ENCODE measurements at regions of chr11 and their contacts with region 1.

Region 1: GRCh38 chr11:119356349-119357031 is 10.0 kb upstream of the MFRP start:
- DNase-seq: peak; percentile 54 to 86 (median 73)
- ATAC-seq: peak; percentile 92
- H3K4me3 ChIP-seq: peak overlapping the region; percentile 73 to 96
- H3K4me3 Mint-ChIP-seq: peak overlapping the region; percentile 91
- H3K27ac ChIP-seq: no peak overlapping the region
- H3K27ac Mint-ChIP-seq: peak overlapping the region; percentile 76
- H3K4me1 ChIP-seq: no peaks in the 10 kb centered on the region
- H3K4me1 Mint-ChIP-seq: peaks cover 7% of the 10 kb centered on the region
- H3K27me3 ChIP-seq: peaks cover 0 to 15% of the 10 kb centered on the region in 2 experiments
- H3K27me3 Mint-ChIP-seq: peaks cover 20% of the 10 kb centered on the region
- CTCF ChIP-seq: peak; percentile 100

Region 2: DNA sequence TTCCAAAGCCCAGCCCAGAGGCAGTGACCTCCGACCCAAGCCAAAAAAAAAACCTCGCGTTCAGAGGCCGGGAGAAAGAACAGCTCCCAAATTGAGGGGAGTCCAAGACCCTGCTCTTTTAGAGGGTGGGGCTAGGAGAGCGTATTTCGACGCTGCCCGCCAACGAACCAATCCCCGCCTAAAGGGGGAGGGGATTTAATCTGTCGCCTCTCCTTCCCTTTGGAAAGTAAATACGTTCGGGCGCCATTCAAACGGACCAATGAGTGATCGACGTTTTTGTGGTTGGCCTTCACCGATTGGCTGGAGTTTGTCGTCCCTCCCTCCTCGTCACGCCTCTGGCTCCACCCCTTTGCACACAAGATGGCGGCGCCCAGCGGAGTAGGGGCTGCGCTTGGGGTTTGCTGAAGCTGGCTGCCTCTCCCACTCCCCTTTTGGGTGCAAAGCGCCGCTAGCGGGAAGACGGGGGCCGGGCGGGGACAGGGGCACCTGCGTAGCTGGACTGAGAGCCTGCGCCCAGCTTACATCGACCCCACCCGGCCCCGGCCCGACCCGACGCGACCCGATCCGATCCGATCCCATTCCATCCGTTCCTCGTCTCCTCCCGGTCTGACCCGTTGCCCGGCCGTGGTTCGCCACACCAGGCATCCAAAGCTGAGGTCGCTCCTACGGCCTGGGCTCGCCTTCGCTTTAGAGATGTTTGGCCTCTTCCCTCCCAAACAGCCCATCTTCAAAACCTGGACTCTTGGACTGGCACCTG is 22.1 kb before region 1 on chr11 and contains the start of gene RNF26:
- CTCF ChIA-PET with region 1: interaction called, 18 read pairs
- POLR2A ChIA-PET with region 1: no interaction called
- intact Hi-C with region 1: no loop called
- DNase-seq: peak; percentile 88 to 98 (median 93)
- ATAC-seq: peak; percentile 95
- H3K4me3 ChIP-seq: peak within 1 kb of the TSS; percentile 77 to 98
- H3K4me3 Mint-ChIP-seq: peak within 1 kb of the TSS; percentile 98
- H3K27ac ChIP-seq: peak within 1 kb of the TSS; percentile 68 to 86
- H3K27ac Mint-ChIP-seq: peak within 1 kb of the TSS; percentile 97
- H3K4me1 ChIP-seq: peaks cover 13% of the 10 kb centered on the region
- H3K4me1 Mint-ChIP-seq: peaks cover 27% of the 10 kb centered on the region
- H3K27me3 ChIP-seq: peaks cover 10 to 11% of the 10 kb centered on the region in 2 experiments
- H3K27me3 Mint-ChIP-seq: peaks cover 12% of the 10 kb centered on the region
- CTCF ChIP-seq: no peak
- total RNA-seq, gene RNF26: 20.9 TPM

Region 3: GRCh38 chr11:119373921-119374631 is 17.6 kb after region 1 on chr11:
- CTCF ChIA-PET with region 1: interaction called, 149 read pairs
- POLR2A ChIA-PET with region 1: interaction called, 4 read pairs
- intact Hi-C with region 1: loop called in 1 of 2 experiments (anchors 1 kb)
- DNase-seq: peak in 4 of 9 experiments; percentile 43 to 67 (median 54)
- ATAC-seq: peak; percentile 73
- H3K4me3 ChIP-seq: no peak overlapping the region
- H3K4me3 Mint-ChIP-seq: no peak overlapping the region
- H3K27ac ChIP-seq: no peak overlapping the region
- H3K27ac Mint-ChIP-seq: no peak overlapping the region
- H3K4me1 ChIP-seq: peaks cover 8% of the 10 kb centered on the region
- H3K4me1 Mint-ChIP-seq: peaks cover 14% of the 10 kb centered on the region
- H3K27me3 ChIP-seq: no peaks in the 10 kb centered on the region
- H3K27me3 Mint-ChIP-seq: peaks cover 13% of the 10 kb centered on the region
- CTCF ChIP-seq: peak; percentile 55

Region 4: GRCh38 chr11:119474682-119475596 is 118.4 kb after region 1 on chr11:
- CTCF ChIA-PET with region 1: interaction called, 34 read pairs
- POLR2A ChIA-PET with region 1: no interaction called
- intact Hi-C with region 1: loop called in 1 of 2 experiments (anchors 1 kb)
- DNase-seq: peak; percentile 10 to 71 (median 48)
- ATAC-seq: peak; percentile 75
- H3K4me3 ChIP-seq: no peak overlapping the region
- H3K4me3 Mint-ChIP-seq: no peak overlapping the region
- H3K27ac ChIP-seq: no peak overlapping the region
- H3K27ac Mint-ChIP-seq: no peak overlapping the region
- H3K4me1 ChIP-seq: no peaks in the 10 kb centered on the region
- H3K4me1 Mint-ChIP-seq: no peaks in the 10 kb centered on the region
- H3K27me3 ChIP-seq: no peaks in the 10 kb centered on the region
- H3K27me3 Mint-ChIP-seq: peaks cover 34% of the 10 kb centered on the region
- CTCF ChIP-seq: peak; percentile 69

Region 5: GRCh38 chr11:119545978-119546885 is 189.7 kb after region 1 on chr11:
- CTCF ChIA-PET with region 1: no interaction called
- POLR2A ChIA-PET with region 1: no interaction called
- intact Hi-C with region 1: no loop called
- DNase-seq: peak in 1 of 9 experiments; percentile 39
- ATAC-seq: no peak
- H3K4me3 ChIP-seq: no peak overlapping the region
- H3K4me3 Mint-ChIP-seq: no peak overlapping the region
- H3K27ac ChIP-seq: no peak overlapping the region
- H3K27ac Mint-ChIP-seq: no peak overlapping the region
- H3K4me1 ChIP-seq: no peaks in the 10 kb centered on the region
- H3K4me1 Mint-ChIP-seq: no peaks in the 10 kb centered on the region
- H3K27me3 ChIP-seq: no peaks in the 10 kb centered on the region
- H3K27me3 Mint-ChIP-seq: peaks cover 4% of the 10 kb centered on the region
- CTCF ChIP-seq: no peak

Region 6: DNA sequence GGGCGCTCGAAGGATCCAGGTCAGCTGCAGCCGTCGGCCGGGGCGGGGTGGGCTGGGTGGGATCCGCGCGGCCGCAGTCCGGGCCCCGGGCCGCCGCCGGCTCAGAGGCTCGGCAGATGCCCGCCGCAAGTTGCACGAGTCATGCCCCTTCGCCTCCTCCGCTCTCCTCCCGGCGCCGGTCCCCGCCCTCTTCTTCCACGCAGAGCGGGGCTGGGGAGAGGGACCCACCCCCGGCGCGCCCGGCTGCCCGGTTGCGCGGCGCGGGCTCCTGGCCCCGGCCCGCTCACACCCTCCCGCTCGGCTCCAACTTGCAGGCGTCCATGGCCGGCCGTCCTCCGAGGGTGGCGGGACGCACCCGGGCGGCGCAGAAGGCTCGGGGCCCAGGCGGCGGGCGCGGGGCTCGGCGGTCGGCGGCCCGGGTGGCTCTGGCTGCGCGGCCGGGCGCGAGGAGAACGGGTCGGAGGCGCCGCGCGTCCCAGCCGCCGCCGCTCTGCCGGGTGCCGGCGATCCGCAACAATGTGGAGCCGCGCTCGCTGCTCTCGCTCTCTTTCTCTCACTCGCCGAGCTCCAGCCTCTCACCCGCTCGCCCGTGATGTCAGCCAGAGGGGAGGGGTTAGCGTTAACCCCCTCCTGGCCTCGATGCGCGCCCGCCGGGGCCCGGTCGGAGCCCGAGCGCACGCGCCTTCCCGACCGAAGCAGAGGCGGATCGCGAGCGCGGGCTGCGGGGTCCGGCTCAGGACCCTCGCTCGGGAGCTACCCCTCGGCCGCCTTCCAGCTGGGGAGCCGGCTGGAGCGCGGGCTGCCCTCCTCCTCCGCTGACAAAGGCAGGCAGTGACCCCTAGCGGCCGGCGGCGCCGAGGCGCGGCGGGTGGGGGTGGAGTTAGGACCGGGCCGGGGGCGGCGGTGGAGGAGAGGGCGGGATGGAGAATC is 372.4 kb after region 1 on chr11 and contains the start of gene NECTIN1:
- CTCF ChIA-PET with region 1: interaction called, 6 read pairs
- POLR2A ChIA-PET with region 1: no interaction called
- intact Hi-C with region 1: loop called in 1 of 2 experiments (anchors 10 kb)
- DNase-seq: peak; percentile 67 to 90 (median 84)
- ATAC-seq: peak; percentile 86
- H3K4me3 ChIP-seq: peak within 1 kb of the TSS; percentile 56 to 88
- H3K4me3 Mint-ChIP-seq: peak within 1 kb of the TSS; percentile 94
- H3K27ac ChIP-seq: no peak within 1 kb of the TSS
- H3K27ac Mint-ChIP-seq: peak within 1 kb of the TSS; percentile 86
- H3K4me1 ChIP-seq: peaks cover 20% of the 10 kb centered on the region
- H3K4me1 Mint-ChIP-seq: peaks cover 19% of the 10 kb centered on the region
- H3K27me3 ChIP-seq: peaks cover 9 to 15% of the 10 kb centered on the region in 2 experiments
- H3K27me3 Mint-ChIP-seq: peaks cover 16% of the 10 kb centered on the region
- CTCF ChIP-seq: peak; percentile 96
- total RNA-seq, gene NECTIN1: 6.4 to 6.9 TPM

Measured in CD8-positive, alpha-beta T cell (primary cell).